ENCODE measurements at regions of chr18 and their contacts with region 1.

Region 1: DNA sequence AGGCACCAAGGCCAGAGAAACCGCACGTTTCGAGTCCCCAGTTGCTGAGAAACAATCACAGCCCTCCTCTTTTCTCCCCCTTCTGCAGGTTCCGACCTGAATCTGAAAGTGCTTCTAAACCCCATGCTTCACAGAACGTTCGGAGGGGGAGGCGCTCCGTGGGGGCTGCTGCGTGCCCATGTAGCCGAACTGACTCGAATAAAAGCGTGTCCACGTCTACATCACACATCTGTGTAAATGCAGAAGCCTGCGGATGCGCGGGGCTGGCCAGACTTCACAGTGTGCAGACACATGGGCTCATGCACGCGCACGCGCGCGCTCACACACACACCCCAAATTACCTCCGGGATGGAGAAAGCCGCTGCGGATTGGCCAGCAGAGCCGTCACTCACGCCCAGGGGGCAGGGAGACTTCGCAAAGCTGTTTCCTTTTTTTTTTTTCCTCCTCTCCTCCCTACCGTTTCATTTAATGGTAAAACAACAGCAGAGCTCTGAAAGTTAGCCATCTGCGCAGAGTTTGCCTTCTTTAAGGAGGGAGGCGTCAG is 2.3 kb downstream of the ZNF516 start:
- DNase-seq: peak; percentile 100
- ATAC-seq: peak; percentile 95
- H3K4me3 ChIP-seq: peak overlapping the region; percentile 100
- H3K27ac ChIP-seq: peak overlapping the region; percentile 83
- H3K4me1 ChIP-seq: no peaks in the 10 kb centered on the region
- H3K27me3 ChIP-seq: no peaks in the 10 kb centered on the region

Region 2: DNA sequence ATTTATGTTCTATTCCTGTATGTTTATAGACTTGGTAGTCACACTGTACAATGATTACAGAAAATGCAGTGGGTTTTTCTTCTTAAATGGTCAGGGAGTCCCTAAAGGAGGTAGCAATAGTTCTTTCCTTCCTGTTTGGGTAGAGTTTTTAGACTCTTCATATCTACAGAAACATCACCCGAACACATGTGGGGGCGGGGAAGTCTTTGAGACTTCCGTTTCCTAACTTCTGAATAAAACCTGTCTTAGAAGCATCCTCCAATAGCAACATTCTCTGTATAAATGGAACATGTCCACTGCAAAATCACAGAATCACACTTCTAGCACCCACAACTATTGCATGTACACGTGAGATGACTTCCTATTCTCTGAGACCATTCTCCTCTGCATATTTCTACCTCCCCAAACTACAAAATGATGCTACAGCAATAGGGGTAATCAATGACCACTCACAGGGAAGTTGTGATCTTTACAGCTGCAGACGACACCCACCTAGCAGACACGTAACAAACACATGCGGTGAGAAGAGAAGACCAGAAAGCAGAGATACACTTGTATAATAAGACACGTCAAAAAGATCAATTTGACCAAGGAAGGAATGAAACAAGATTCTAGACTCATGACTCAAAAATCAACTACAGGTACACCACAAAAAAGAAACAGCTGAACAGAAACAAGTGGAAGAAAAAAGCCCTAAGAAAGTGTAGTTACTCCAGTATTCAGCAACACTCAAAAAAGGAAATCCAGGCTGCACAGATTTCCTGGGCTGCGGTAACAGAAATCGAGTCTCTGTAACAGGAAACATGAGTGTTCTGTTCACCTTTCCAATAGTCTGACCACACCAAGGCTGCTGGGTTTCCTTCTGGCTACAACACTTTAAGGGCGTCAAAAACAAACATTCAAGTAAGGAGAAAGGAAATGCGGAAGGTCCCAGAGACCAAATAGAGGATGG is 118.1 kb before region 1 on chr18:
- intact Hi-C with region 1: no loop called
- DNase-seq: no peak
- ATAC-seq: no peak
- H3K4me3 ChIP-seq: no peak overlapping the region
- H3K27ac ChIP-seq: no peak overlapping the region
- H3K4me1 ChIP-seq: no peaks in the 10 kb centered on the region
- H3K27me3 ChIP-seq: no peaks in the 10 kb centered on the region

Region 3: GRCh38 chr18:76405681-76406356 is 86.9 kb before region 1 on chr18:
- intact Hi-C with region 1: loop called in 1 of 4 experiments (anchors 10 kb)
- DNase-seq: peak; percentile 61 to 87 (median 79)
- ATAC-seq: peak; percentile 42 to 62
- H3K4me3 ChIP-seq: no peak overlapping the region
- H3K27ac ChIP-seq: no peak overlapping the region
- H3K4me1 ChIP-seq: no peaks in the 10 kb centered on the region
- H3K27me3 ChIP-seq: no peaks in the 10 kb centered on the region

Region 4: DNA sequence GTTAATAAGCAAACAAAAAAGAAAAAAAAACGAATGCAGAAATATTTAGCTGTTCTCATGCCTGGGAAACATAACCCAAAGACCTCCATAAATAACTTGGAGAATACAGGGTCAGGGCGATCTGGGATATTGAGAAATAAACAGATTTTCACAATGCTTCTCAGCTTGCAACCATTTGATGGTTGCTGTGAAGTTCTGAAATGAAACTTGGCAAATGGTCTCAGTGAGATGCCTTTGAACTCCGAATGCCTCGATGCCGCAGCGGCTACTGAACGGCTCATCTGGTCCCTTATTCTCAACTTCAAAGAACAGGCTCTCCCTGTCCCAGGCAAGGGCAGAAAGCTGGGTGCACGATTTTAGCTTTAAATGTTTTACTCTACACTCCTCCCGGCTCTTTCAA is 75.8 kb before region 1 on chr18:
- intact Hi-C with region 1: loop called in 1 of 4 experiments (anchors 5 kb)
- DNase-seq: no peak
- ATAC-seq: peak in 1 of 2 donors; percentile 41
- H3K4me3 ChIP-seq: no peak overlapping the region
- H3K27ac ChIP-seq: no peak overlapping the region
- H3K4me1 ChIP-seq: peaks cover 4% of the 10 kb centered on the region
- H3K27me3 ChIP-seq: no peaks in the 10 kb centered on the region

Region 5: GRCh38 chr18:76450452-76451395 is 42.0 kb before region 1 on chr18:
- intact Hi-C with region 1: loop called in 1 of 4 experiments (anchors 5 kb)
- DNase-seq: peak; percentile 63 to 87 (median 86)
- ATAC-seq: peak; percentile 79 to 81
- H3K4me3 ChIP-seq: peak overlapping the region; percentile 60
- H3K27ac ChIP-seq: peak overlapping the region; percentile 84
- H3K4me1 ChIP-seq: peaks cover 12% of the 10 kb centered on the region
- H3K27me3 ChIP-seq: no peaks in the 10 kb centered on the region

Region 6: DNA sequence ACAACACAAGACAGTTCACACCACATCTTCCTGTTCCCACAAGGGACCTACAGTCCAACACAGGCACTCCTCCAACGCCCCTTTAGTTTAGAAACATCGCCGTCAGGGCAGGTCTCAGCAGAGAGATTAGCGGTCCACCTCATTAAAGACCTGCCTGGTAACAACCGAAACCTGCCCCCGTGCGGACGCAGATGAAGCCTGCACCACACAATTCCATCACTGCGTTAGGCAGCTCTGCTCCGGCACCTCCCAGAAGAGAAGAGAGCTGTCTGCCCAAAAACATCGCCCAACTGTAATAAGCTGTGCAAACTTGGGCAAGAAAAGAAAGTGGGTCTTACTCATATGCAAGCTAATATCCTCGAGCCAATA is 30.4 kb before region 1 on chr18:
- intact Hi-C with region 1: no loop called
- DNase-seq: no peak
- ATAC-seq: no peak
- H3K4me3 ChIP-seq: no peak overlapping the region
- H3K27ac ChIP-seq: no peak overlapping the region
- H3K4me1 ChIP-seq: no peaks in the 10 kb centered on the region
- H3K27me3 ChIP-seq: no peaks in the 10 kb centered on the region

Region 7: DNA sequence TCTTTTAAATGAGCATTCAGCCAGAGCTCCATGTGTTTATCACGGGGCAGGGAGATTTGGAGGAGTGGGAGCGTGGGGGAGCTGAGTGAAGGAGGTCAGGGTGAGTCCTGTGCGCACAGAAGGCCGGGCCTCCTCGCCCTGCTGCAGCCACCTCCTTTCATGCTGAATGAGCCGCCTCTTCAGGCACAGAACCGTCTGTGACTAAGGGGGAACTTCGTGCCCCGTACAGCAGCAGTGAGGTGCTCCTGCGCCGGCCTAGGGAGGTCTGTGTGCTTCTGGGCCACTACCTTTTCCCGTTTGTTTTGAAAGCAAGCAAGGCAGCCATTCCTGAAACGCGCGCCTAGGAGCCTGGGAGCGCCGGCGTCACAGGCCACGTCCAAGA is 29.4 kb after region 1 on chr18:
- intact Hi-C with region 1: loop called in 1 of 4 experiments (anchors 2 kb)
- DNase-seq: peak in 1 of 3 donors; percentile 42
- ATAC-seq: no peak
- H3K4me3 ChIP-seq: no peak overlapping the region
- H3K27ac ChIP-seq: no peak overlapping the region
- H3K4me1 ChIP-seq: no peaks in the 10 kb centered on the region
- H3K27me3 ChIP-seq: no peaks in the 10 kb centered on the region

Measured in right cardiac atrium (tissue), 5 donors.